ENCODE measurements at regions of chr2 and their contacts with region 1.

Region 1: GRCh38 chr2:240586198-240586918 is at the start of gene CAPN10:
- DNase-seq: peak; percentile 95
- H3K4me3 ChIP-seq: peak within 1 kb of the TSS; percentile 63 to 86 (median 67)
- H3K27ac ChIP-seq: peak within 1 kb of the TSS; percentile 75
- H3K4me1 ChIP-seq: peaks cover 47% of the 10 kb centered on the region
- H3K27me3 ChIP-seq: no peaks in the 10 kb centered on the region
- CTCF ChIP-seq: no peak
- total RNA-seq, gene CAPN10: 16.0 to 27.7 TPM

Region 2: GRCh38 chr2:240520130-240520973 is 66.0 kb before region 1 on chr2:
- CTCF ChIA-PET with region 1: no interaction called
- dilution Hi-C with region 1: no loop called
- in situ Hi-C with region 1: no loop called
- intact Hi-C with region 1: no loop called
- DNase-seq: no peak
- H3K4me3 ChIP-seq: peak overlapping the region in 1 of 3 experiments; percentile 8
- H3K27ac ChIP-seq: no peak overlapping the region
- H3K4me1 ChIP-seq: no peaks in the 10 kb centered on the region
- H3K27me3 ChIP-seq: no peaks in the 10 kb centered on the region
- CTCF ChIP-seq: no peak

Region 3: GRCh38 chr2:240566203-240567136 is 19.9 kb before region 1 on chr2:
- CTCF ChIA-PET with region 1: interaction called, 10 read pairs
- dilution Hi-C with region 1: no loop called
- in situ Hi-C with region 1: no loop called
- intact Hi-C with region 1: loop called (anchors 1 kb)
- DNase-seq: peak; percentile 73
- H3K4me3 ChIP-seq: peak overlapping the region in 2 of 3 experiments; percentile 65 to 67
- H3K27ac ChIP-seq: peak overlapping the region; percentile 61
- H3K4me1 ChIP-seq: peaks cover 46% of the 10 kb centered on the region
- H3K27me3 ChIP-seq: no peaks in the 10 kb centered on the region
- CTCF ChIP-seq: peak; percentile 68 to 73

Measured in mammary epithelial cell (primary cell).